ENCODE measurements at regions of chr7 and their contacts with region 1.

Region 1: DNA sequence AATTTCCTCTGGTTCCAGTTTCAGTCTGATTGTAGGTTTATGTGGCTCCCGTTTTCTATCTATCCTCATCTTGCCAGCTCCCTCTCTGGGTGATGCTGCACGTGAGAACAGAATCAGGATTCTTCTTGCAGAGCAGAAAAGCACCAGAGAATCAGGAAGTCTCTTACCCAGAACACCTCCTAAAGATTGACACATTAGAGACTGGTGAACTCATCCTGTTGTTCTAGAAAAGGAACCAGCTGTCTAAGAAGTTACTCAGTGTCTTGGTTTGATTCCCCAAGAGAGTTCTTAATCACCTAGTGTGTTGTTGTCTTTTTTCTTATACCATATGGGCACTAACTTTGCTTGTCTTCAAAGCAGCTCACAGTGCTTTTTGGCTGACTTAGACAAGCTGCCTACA is 152.4 kb downstream of the DGKI start:
- DNase-seq: no peak
- H3K4me3 Mint-ChIP-seq: no peak overlapping the region
- H3K27ac Mint-ChIP-seq: no peak overlapping the region
- H3K4me1 Mint-ChIP-seq: no peaks in the 10 kb centered on the region
- H3K27me3 Mint-ChIP-seq: peaks cover 11% of the 10 kb centered on the region

Region 2: GRCh38 chr7:137681657-137682562 is 12.5 kb before region 1 on chr7:
- CTCF ChIA-PET with region 1: no interaction called
- intact Hi-C with region 1: loop called (anchors 2 kb)
- DNase-seq: no peak
- H3K4me3 Mint-ChIP-seq: no peak overlapping the region
- H3K27ac Mint-ChIP-seq: no peak overlapping the region
- H3K4me1 Mint-ChIP-seq: no peaks in the 10 kb centered on the region
- H3K27me3 Mint-ChIP-seq: peaks cover 16% of the 10 kb centered on the region

Measured in activated naive CD4-positive, alpha-beta T cell treated with anti-CD3 and anti-CD28 coated beads for 36 hours (primary cell).